ENCODE measurements at regions of chr18 and their contacts with region 1.

Region 1: GRCh38 chr18:50203801-50204604 is 9.1 kb upstream of the MYO5B start:
- DNase-seq: peak in 1 of 2 donors; percentile 19
- ATAC-seq: peak; percentile 35 to 75 (median 47)
- H3K4me3 ChIP-seq: peak overlapping the region; percentile 23
- H3K27ac ChIP-seq: no peak overlapping the region
- H3K4me1 ChIP-seq: no peaks in the 10 kb centered on the region
- H3K27me3 ChIP-seq: peaks cover 0 to 11% (median 5%) of the 10 kb centered on the region in 3 donors
- CTCF ChIP-seq: peak; percentile 59

Region 2: GRCh38 chr18:49944663-49945062 is 259.3 kb before region 1 on chr18:
- intact Hi-C with region 1: loop called (anchors 5 to 10 kb)
- DNase-seq: peak in 1 of 2 donors; percentile 19
- ATAC-seq: peak in 2 of 4 donors; percentile 57 to 73
- H3K4me3 ChIP-seq: no peak overlapping the region
- H3K27ac ChIP-seq: no peak overlapping the region
- H3K4me1 ChIP-seq: no peaks in the 10 kb centered on the region
- H3K27me3 ChIP-seq: peaks cover 0 to 3% (median 0%) of the 10 kb centered on the region in 3 donors
- CTCF ChIP-seq: peak; percentile 36

Region 3: GRCh38 chr18:50262977-50263376 is 59.0 kb after region 1 on chr18:
- intact Hi-C with region 1: no loop called
- DNase-seq: no peak
- ATAC-seq: no peak
- H3K4me3 ChIP-seq: no peak overlapping the region
- H3K27ac ChIP-seq: no peak overlapping the region
- H3K4me1 ChIP-seq: peaks cover 4% of the 10 kb centered on the region
- H3K27me3 ChIP-seq: no peaks in the 10 kb centered on the region
- CTCF ChIP-seq: no peak

Region 4: DNA sequence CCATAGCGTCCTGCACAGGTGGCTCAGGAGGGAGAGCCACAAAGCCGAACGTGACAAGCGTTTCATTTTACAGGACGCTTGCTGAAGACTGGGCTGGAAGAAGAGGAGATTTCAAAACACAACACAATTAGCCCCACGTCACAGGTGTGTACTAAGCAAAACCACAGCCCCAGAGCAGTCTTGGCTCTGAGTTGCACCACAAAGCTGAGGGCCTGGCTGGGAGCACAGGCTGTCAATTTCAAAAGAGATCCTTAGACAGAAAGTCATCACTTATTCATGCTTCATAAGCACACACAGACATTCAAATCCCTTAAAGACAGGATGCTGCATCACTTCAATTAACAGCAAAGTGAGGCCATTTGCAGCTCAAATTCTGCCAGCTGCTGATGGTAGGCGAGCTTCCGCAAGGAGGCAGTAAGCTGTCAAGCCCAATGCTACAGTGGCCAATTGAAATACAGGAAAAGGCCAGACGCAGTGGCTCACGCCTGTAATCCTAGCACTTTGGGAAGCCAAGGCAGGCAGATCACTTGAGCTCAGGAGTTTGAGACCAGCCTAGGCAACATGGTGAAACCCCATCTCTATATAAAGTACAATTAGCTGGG is 250.5 kb after region 1 on chr18:
- intact Hi-C with region 1: no loop called
- DNase-seq: no peak
- ATAC-seq: peak in 2 of 4 donors; percentile 45 to 81
- H3K4me3 ChIP-seq: no peak overlapping the region
- H3K27ac ChIP-seq: no peak overlapping the region
- H3K4me1 ChIP-seq: no peaks in the 10 kb centered on the region
- H3K27me3 ChIP-seq: no peaks in the 10 kb centered on the region
- CTCF ChIP-seq: no peak

Measured in psoas muscle (tissue), 8 donors.